Head of caudate nucleus (tissue), 42 donors: ENCODE measurements at regions of chr3 and their contacts with region 1.

Region 1: DNA sequence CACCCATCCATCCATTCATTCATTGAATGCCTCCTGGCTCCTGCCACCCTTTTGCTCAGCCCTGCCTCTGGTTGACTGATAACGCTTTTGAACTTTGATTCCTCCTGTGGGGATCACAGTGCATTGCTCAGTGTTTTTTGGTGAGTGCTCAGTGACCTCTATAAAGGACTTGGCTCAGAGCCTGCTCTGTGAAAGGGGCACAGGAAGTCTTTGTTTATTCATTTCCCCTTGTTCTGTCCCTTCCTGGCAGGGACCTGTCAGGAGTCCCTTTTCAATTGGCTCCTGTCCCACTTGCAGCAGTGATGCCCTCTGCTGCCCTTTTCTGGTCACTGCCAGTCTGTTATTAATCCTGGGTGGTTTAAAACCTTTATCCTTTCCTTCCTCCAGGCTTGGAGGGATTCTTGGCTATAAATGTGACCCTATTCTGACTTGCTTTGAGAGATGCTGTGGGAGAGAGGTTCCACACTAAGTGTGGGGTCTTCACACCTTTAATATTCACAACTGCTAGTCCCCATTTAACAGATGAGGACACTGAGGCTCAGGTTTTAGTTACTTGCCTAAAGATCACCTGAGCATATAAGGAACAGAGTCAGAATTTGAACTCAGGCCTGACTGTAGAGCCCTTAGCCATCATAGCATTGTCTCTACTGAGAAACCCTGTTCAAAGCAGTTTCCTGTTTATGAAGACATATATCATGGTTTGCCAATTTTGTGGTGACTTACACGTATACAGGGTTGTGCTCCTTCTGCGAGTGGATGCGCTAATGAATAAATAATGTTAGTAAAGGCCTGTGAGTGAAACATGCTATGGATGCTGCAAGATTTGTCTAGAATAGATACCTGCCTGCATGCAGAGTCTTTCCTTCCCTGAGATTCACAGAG is 23.2 kb upstream of the TATDN2 start:
- DNase-seq: peak; percentile 45 to 93 (median 80)

Region 2: DNA sequence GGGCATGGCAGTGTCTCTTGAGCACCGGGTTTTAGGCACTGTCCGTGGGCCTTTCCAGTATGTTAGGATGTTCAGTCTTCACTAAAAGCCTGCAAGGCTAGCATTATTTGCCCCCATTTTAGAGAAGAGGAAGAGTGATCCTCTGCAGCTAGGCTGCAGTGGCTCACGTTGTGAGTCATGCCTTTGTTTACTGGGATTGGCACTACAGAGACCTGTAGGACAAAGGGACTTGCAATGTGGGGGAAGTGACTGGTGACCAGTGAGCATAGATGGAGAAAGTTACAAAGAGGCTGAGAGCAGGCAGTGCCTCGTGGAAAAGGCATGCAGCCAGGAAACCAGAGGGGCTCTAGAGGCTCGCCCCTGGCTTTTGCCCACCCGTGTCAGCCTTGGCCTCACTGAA is 548.2 kb before region 1 on chr3:
- intact Hi-C with region 1: no loop called
- DNase-seq: no peak

Region 3: GRCh38 chr3:9915254-9916141 is 309.5 kb before region 1 on chr3:
- intact Hi-C with region 1: no loop called
- DNase-seq: peak in 41 of 42 donors; percentile 32 to 82 (median 67)

Region 4: GRCh38 chr3:10026084-10026890 is 198.7 kb before region 1 on chr3 and contains the start of gene FANCD2:
- intact Hi-C with region 1: loop called (anchors 10 kb)
- DNase-seq: peak; percentile 85 to 97 (median 92)

Region 5: GRCh38 chr3:10173926-10174435 is 51.0 kb before region 1 on chr3:
- intact Hi-C with region 1: loop called (anchors 10 kb)
- DNase-seq: peak in 41 of 42 donors; percentile 10 to 86 (median 52)